ENCODE measurements at regions of chr7 and their contacts with region 1.

Region 1: DNA sequence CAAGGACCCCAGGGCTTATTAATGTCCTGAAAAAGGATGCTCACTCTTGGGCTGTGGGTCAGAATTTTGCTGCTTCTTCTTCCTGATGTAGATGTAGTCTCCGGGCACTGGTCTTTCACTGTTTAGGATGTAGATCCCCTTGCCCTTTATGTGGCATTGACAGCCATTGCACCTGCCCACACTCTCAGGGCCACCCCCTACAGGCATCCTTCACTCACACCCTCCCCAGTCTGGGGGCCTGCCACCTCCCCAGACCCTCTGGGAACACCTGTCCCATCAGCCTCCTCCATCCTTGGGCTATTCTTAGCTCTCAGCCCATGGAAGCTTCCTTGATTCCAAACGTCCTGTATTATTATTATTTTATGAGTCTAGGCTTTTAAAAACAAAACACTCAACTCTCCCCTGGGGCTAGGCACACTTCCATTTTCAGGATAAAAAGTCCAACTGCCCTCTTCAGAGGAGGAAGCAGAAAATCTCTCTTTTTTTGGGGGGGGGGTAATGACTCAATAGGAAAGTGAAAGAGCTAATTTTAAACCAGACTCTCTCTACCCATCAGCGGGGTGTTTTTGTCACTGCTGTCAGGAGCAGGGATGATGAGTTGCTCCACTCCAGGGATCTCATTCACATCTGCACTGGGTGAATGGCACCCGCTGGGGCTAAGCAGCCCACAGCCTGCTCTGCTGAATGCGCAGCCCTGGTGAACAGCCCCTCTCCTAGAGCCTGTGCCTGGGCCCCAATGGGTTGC is 11.5 kb upstream of the KLRG2 start:
- DNase-seq: no peak
- H3K4me3 Mint-ChIP-seq: no peak overlapping the region
- H3K27ac Mint-ChIP-seq: peak overlapping the region; percentile 0
- H3K4me1 Mint-ChIP-seq: peaks cover 18% of the 10 kb centered on the region
- H3K27me3 Mint-ChIP-seq: no peaks in the 10 kb centered on the region
- CTCF ChIP-seq: no peak

Region 2: GRCh38 chr7:139570119-139570518 is 75.1 kb after region 1 on chr7:
- CTCF ChIA-PET with region 1: interaction called, 10 read pairs
- POLR2A ChIA-PET with region 1: no interaction called
- intact Hi-C with region 1: no loop called
- DNase-seq: no peak
- H3K4me3 Mint-ChIP-seq: no peak overlapping the region
- H3K27ac Mint-ChIP-seq: no peak overlapping the region
- H3K4me1 Mint-ChIP-seq: no peaks in the 10 kb centered on the region
- H3K27me3 Mint-ChIP-seq: no peaks in the 10 kb centered on the region
- CTCF ChIP-seq: no peak

Measured in MCF 10A (cell line).